Endothelial cell of umbilical vein (primary cell): ENCODE measurements at regions of chr5 and their contacts with region 1.

Region 1: DNA sequence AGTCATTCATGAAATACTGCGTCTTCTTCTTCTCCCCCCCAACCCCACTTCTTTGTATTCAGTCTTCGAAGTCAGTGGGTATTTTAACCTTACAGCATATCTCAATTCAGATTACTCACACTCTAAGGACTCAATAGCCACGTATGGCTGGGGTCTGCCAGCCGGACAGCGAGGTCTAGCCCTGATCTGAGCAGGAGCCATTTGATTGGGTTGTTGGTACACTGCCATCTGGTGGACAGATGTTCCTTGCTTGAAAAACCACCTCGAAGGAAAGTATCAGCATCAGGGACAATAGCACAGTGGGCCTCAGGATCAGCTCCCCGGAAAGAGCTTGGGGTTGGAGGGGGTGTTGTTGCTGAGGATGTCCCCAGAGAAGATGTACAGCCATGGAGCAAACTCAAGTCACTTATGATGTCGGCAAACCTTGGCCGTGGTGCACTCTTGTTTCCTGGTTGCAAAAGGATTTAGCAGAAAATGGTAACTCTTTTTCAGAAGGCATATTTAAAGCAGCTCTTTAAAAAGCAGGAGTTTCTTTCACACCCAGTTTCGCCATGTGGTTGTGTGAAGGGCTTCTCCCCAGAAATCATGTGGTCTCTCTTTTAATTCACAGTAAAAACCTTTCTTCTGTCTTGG is 31.7 kb upstream of the KCNMB1 start:
- DNase-seq: peak; percentile 68
- H3K4me3 ChIP-seq: no peak overlapping the region
- H3K27ac ChIP-seq: no peak overlapping the region
- H3K4me1 ChIP-seq: no peaks in the 10 kb centered on the region
- H3K27me3 ChIP-seq: peaks cover 3 to 5% of the 10 kb centered on the region in 2 experiments
- CTCF ChIP-seq: peak; percentile 69 to 70
- POLR2A ChIP-seq: no peak

Region 2: GRCh38 chr5:169701910-169702451 is 718.9 kb before region 1 on chr5:
- CTCF ChIA-PET with region 1: interaction called, 3 read pairs
- POLR2A ChIA-PET with region 1: no interaction called
- dilution Hi-C with region 1: no loop called
- intact Hi-C with region 1: loop called (anchors 10 kb)
- DNase-seq: peak; percentile 45
- H3K4me3 ChIP-seq: no peak overlapping the region
- H3K27ac ChIP-seq: no peak overlapping the region
- H3K4me1 ChIP-seq: peaks cover 28% of the 10 kb centered on the region
- H3K27me3 ChIP-seq: no peaks in the 10 kb centered on the region
- CTCF ChIP-seq: peak; percentile 25 to 42
- POLR2A ChIP-seq: no peak

Region 3: DNA sequence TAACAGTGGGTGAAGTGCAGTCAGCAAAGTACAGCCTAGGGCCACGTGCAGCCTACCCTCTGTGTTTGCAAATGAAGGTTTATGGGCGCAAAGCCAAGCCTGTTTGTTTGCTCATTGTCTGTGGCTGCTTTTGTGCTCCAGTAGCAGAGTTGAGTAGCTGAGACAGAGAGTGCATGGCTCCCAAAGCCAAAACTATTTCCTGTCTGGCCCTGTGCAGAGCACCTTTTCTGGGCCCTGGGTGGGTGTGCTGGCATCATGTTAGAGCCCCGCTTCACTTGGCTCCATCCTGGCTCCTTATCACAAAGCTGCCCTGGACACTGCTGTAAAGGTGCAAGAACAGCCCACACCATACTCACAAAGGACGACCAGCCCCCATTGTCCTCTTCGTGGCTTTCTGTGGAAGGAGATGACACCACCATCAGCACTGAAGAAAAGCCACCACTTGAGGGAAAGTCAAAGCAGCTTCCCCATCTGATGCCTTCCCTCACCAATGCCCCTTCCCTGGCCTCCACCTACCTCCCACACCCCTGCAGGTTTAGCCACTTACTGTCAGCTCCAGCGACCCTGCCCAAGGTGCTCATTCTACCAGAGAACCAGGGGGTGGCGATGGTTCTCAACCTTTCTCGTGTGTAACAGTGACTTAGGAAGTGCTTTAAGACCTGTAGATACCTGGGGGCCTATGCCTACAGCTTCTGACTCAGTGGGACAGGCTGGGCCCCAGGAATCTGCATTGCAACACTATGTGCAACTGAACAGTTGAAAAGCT is 146.8 kb before region 1 on chr5:
- CTCF ChIA-PET with region 1: interaction called, 5 read pairs
- POLR2A ChIA-PET with region 1: no interaction called
- dilution Hi-C with region 1: no loop called
- intact Hi-C with region 1: loop called (anchors 1 kb)
- DNase-seq: peak; percentile 30
- H3K4me3 ChIP-seq: no peak overlapping the region
- H3K27ac ChIP-seq: no peak overlapping the region
- H3K4me1 ChIP-seq: peaks cover 4% of the 10 kb centered on the region
- H3K27me3 ChIP-seq: no peaks in the 10 kb centered on the region
- CTCF ChIP-seq: peak in 1 of 2 donors; percentile 39
- POLR2A ChIP-seq: no peak

Region 4: DNA sequence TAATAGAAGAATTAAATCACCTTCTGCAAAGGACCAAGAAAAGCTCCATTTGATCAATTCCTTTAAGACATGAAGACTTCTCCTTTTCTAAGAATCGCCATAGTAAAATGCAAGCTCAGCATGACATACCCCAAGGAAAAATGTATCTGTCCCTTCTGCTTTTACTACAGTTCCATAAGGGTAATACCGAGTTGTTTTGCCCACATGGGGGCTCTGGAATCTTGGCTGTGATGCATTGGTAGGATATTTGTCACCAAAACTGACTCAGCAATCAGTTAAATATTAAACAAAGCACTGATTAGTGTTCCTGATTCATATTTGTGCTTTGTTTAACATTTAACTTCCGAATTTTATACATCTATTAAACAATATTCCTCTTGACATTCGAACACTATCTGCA is 58.6 kb after region 1 on chr5:
- CTCF ChIA-PET with region 1: no interaction called
- POLR2A ChIA-PET with region 1: no interaction called
- dilution Hi-C with region 1: no loop called
- intact Hi-C with region 1: no loop called
- DNase-seq: peak; percentile 71
- H3K4me3 ChIP-seq: no peak overlapping the region
- H3K27ac ChIP-seq: peak overlapping the region; percentile 52
- H3K4me1 ChIP-seq: peaks cover 6% of the 10 kb centered on the region
- H3K27me3 ChIP-seq: no peaks in the 10 kb centered on the region
- CTCF ChIP-seq: peak in 1 of 2 donors; percentile 12
- POLR2A ChIP-seq: no peak